K562 (cell line): ENCODE measurements at regions of chr1 and their contacts with region 1.

Region 1: DNA sequence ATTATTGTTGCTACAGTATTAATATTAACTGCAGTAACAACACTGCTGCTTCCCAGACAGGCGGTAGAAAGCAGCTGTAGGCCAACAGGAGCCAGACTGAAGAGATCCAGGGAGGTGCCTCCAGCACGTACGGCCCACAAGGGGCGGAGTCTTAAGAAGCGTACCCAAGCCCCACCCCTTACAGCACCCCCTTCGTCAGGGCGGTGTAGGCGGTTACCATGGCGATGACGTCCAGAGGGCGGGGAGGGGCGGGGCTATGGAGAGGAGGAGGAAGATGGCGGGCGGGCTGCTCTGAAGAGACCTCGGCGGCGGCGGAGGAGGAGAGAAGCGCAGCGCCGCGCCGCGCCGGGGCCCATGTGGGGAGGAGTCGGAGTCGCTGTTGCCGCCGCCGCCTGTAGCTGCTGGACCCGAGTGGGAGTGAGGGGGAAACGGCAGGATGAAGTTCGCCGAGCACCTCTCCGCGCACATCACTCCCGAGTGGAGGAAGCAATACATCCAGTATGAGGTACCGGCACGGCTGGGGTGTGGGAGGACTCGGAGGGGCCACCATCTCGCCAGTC is at the start of gene XPR1:
- DNase-seq: peak; percentile 99 to 100 (median 99)
- ATAC-seq: peak; percentile 97
- H3K4me3 ChIP-seq: peak within 1 kb of the TSS; percentile 89
- H3K27ac ChIP-seq: peak within 1 kb of the TSS; percentile 78
- H3K4me1 ChIP-seq: peaks cover 5 to 16% of the 10 kb centered on the region in 2 experiments; a peak in 4 of 5 replicates
- H3K27me3 ChIP-seq: no peaks in the 10 kb centered on the region
- CTCF ChIP-seq: peak; percentile 30 to 49 (median 47); a peak in 5 of 6 replicates
- EP300 ChIP-seq: no peak
- POLR2A ChIP-seq: peak; percentile 92
- RAD21 ChIP-seq: peak; percentile 23 to 40; a peak in 2 of 4 replicates
- polyA plus RNA-seq, gene XPR1: 3.0 to 4.7 TPM

Region 2: GRCh38 chr1:180533266-180533987 is 98.4 kb before region 1 on chr1:
- CTCF ChIA-PET with region 1: interaction called, 5 read pairs
- POLR2A ChIA-PET with region 1: interaction called, 3 read pairs
- in situ Hi-C with region 1: no loop called
- intact Hi-C with region 1: loop called (anchors 1 kb)
- DNase-seq: peak; percentile 85 to 93 (median 88)
- ATAC-seq: peak; percentile 96
- H3K4me3 ChIP-seq: no peak overlapping the region
- H3K27ac ChIP-seq: no peak overlapping the region
- H3K4me1 ChIP-seq: peaks cover 0 to 10% of the 10 kb centered on the region in 2 experiments; a peak in 2 of 5 replicates
- H3K27me3 ChIP-seq: no peaks in the 10 kb centered on the region
- CTCF ChIP-seq: peak; percentile 93 to 98 (median 97)
- EP300 ChIP-seq: 0 out of 2 replicates have a peak, but pooled peaks have one; percentile 2
- POLR2A ChIP-seq: no peak
- RAD21 ChIP-seq: peak; percentile 99

Region 3: GRCh38 chr1:180611016-180611930 is 20.6 kb before region 1 on chr1:
- CTCF ChIA-PET with region 1: no interaction called
- POLR2A ChIA-PET with region 1: interaction called, 15 read pairs
- in situ Hi-C with region 1: no loop called
- intact Hi-C with region 1: loop called (anchors 1 kb)
- DNase-seq: peak; percentile 79 to 94 (median 83)
- ATAC-seq: peak; percentile 87
- H3K4me3 ChIP-seq: no peak overlapping the region
- H3K27ac ChIP-seq: peak overlapping the region; percentile 91
- H3K4me1 ChIP-seq: peaks cover 12 to 54% of the 10 kb centered on the region in 2 experiments
- H3K27me3 ChIP-seq: no peaks in the 10 kb centered on the region
- CTCF ChIP-seq: no peak
- EP300 ChIP-seq: peak; percentile 86; the same call in 1 of the 2 replicates
- POLR2A ChIP-seq: peak; percentile 61; the same call in 1 of the 2 replicates
- RAD21 ChIP-seq: peak in 1 of 2 experiments; percentile 16; a peak in 1 of 4 replicates

Region 4: DNA sequence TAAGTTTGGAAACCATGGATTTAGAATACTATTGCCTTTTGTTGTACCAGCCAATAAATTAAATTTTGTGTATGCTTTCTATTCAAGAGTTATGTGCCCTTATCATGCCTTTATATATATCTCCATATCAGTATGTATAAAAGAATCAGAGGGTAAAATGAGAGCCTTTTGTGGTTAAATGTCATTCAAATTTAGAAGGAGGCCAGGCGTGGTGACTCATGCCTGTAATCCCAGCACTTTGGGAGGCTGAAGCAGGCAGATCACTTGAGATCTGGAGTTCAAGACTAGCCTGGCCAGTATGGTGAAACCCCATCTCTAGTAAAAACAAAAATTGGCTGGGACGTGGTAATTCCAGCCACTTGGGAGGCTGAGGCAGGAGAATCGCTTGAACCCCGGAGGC is 88.9 kb after region 1 on chr1:
- CTCF ChIA-PET with region 1: no interaction called
- POLR2A ChIA-PET with region 1: no interaction called
- in situ Hi-C with region 1: no loop called
- intact Hi-C with region 1: loop called (anchors 5 kb)
- DNase-seq: peak in 1 of 4 experiments; percentile 6
- ATAC-seq: no peak
- H3K4me3 ChIP-seq: no peak overlapping the region
- H3K27ac ChIP-seq: no peak overlapping the region
- H3K4me1 ChIP-seq: no peaks in the 10 kb centered on the region; a peak in 1 of 5 replicates
- H3K27me3 ChIP-seq: no peaks in the 10 kb centered on the region
- CTCF ChIP-seq: no peak
- EP300 ChIP-seq: no peak
- POLR2A ChIP-seq: no peak
- RAD21 ChIP-seq: no peak

Region 5: DNA sequence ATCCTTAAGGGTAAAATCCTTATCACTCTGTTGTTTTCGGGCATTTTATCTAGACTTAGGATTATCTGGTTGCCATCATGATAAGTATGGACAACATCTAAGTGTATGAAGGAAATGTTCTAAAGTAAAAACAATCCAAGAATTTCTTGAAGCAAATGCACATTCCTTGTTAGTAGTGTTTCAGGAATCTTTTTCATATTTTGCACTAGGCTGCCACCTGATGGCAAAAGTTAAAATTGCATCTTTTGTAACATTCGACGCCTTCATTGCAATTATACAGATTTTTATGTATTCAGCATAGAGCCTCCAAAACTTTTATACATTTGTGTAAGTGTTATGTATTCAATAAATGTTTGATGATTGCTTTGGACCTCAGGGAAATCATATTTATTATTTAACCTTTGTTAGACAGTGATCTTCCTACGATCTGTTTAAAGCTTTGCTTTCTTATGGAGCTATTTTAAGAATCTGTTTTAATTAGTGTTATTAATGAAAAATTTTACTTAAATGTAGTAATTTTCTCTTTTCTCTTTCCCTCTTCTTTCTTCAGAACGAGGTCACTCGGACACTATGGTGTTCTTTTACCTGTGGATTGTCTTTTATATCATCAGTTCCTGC is 231.4 kb after region 1 on chr1:
- CTCF ChIA-PET with region 1: interaction called, 4 read pairs
- POLR2A ChIA-PET with region 1: no interaction called
- in situ Hi-C with region 1: no loop called
- intact Hi-C with region 1: loop called (anchors 5 kb)
- DNase-seq: peak; percentile 30 to 74 (median 41)
- ATAC-seq: peak; percentile 80
- H3K4me3 ChIP-seq: no peak overlapping the region
- H3K27ac ChIP-seq: no peak overlapping the region
- H3K4me1 ChIP-seq: no peaks in the 10 kb centered on the region; a peak in 1 of 5 replicates
- H3K27me3 ChIP-seq: no peaks in the 10 kb centered on the region
- CTCF ChIP-seq: peak; percentile 55 to 94 (median 60); a peak in 5 of 6 replicates
- EP300 ChIP-seq: no peak
- POLR2A ChIP-seq: no peak
- RAD21 ChIP-seq: peak; percentile 98 to 99

Region 6: DNA sequence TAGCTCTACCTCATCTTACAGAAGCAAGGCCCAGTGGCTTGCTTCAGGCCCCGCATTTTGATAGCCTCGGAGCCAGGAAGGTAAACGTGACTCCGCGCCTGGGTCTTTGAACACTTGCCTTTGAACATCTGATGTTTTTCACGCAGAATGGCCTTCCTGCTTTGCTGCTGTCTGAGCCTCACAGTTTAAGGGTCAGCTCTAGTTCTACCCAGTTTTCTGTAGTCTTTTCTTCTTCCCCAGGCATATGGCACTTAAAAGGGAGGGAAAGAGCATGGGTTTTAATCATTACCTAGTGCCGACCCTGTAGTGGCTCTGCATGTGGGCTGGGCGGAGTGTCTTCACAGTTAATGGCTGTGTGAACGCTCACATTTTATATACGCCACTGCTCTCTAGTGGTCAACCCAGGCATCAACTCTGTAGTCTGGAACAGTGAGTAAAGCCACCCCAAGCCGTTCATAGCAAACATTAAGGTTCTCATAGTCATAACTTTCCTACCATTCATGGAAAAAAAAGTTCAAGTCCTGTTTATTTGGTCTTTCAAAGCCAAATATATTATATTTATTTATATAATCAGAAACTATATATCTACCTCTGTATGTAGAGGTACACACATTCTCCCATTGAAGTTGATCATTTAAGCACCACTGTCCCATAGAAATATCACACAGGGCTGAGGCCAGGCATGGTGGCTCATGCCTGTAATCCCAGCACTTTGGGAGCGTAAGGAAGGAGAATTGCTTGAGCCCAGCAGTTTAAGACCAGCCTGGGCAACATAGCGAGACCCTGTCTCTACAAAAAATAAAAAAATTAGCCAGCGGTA is 534.7 kb after region 1 on chr1:
- CTCF ChIA-PET with region 1: no interaction called
- POLR2A ChIA-PET with region 1: no interaction called
- in situ Hi-C with region 1: loop called (anchors 25 kb)
- intact Hi-C with region 1: no loop called
- DNase-seq: peak; percentile 82 to 90 (median 84)
- ATAC-seq: peak; percentile 100
- H3K4me3 ChIP-seq: no peak overlapping the region
- H3K27ac ChIP-seq: no peak overlapping the region; the same call in 2 of the 3 replicates
- H3K4me1 ChIP-seq: no peaks in the 10 kb centered on the region; a peak in 1 of 5 replicates
- H3K27me3 ChIP-seq: no peaks in the 10 kb centered on the region
- CTCF ChIP-seq: peak; percentile 89 to 97 (median 94)
- EP300 ChIP-seq: no peak; the same call in 1 of the 2 replicates
- POLR2A ChIP-seq: no peak
- RAD21 ChIP-seq: peak; percentile 96 to 99